Activated naive CD8-positive, alpha-beta T cell treated with anti-CD3 and anti-CD28 coated beads, Interleukin-2, amount 10 ng/mL, durations not matched to agents 7 days and 5 days (primary cell): ENCODE measurements at regions of chr16 and their contacts with region 1.

Region 1: GRCh38 chr16:24550295-24550694 is 10.9 kb downstream of the RBBP6 start:
- DNase-seq: no peak
- ATAC-seq: no peak
- H3K4me3 Mint-ChIP-seq: no peak overlapping the region
- H3K27ac Mint-ChIP-seq: no peak overlapping the region
- H3K4me1 Mint-ChIP-seq: peaks cover 32% of the 10 kb centered on the region
- H3K27me3 Mint-ChIP-seq: no peaks in the 10 kb centered on the region

Region 2: DNA sequence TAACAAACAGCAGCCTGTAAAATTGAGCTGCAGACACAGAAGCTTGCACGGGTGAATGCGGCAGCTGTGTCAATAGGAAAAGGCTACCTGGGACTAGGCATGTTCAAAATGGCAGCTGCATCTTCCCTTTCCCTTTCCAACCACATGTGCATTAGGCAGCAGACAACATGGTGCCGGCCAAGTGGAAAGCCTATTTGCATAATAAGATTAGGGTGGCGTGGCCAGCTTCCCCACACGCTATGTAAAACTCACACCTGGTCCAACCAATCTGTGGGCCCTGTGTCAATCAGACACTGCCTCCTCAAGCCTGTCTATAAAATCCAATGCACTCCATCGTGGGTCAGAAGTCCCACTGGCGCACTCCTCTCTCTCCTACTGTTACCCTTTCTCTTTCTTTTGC is 71.9 kb before region 1 on chr16:
- POLR2A ChIA-PET with region 1: no interaction called
- DNase-seq: no peak
- ATAC-seq: no peak
- H3K4me3 Mint-ChIP-seq: no peak overlapping the region
- H3K27ac Mint-ChIP-seq: no peak overlapping the region
- H3K4me1 Mint-ChIP-seq: no peaks in the 10 kb centered on the region
- H3K27me3 Mint-ChIP-seq: peaks cover 10% of the 10 kb centered on the region

Region 3: DNA sequence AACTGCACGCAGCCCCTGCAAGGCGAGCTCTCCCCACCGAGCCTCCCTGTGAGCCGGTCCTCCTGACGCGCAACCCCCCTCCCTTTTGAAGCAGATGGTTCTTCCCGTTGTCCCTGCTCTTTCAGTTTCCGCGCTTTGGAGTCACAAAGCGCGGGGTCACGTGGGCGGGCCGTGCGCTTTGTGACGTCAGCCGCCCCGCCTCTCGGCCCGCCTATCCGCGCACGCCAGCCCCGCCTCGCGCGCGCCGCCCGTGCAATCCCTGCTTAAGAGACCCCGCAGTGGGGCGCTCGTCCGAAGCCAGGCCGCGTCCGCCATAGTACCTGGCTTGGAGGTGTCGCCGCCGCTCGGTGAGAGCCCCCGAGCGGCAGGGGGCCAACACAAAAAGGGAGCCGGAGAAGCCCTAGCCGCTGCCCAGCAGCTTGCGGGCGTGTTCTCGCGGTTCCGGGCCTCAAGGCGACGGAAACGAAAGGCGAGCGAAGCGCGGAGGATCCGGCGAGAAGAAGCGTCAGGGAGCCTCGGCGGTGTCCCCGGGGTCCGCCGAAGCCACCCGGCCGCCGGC is 10.9 kb before region 1 on chr16 and contains the start of gene RBBP6:
- POLR2A ChIA-PET with region 1: interaction called, 12 read pairs
- DNase-seq: peak; percentile 97
- ATAC-seq: peak; percentile 88
- H3K4me3 Mint-ChIP-seq: peak within 1 kb of the TSS; percentile 98
- H3K27ac Mint-ChIP-seq: peak within 1 kb of the TSS; percentile 100
- H3K4me1 Mint-ChIP-seq: peaks cover 18% of the 10 kb centered on the region
- H3K27me3 Mint-ChIP-seq: no peaks in the 10 kb centered on the region
- total RNA-seq, gene RBBP6: 77.2 to 88.9 TPM